CD8-positive, alpha-beta T cell (primary cell): ENCODE measurements at regions of chr14 and their contacts with region 1.

Region 1: GRCh38 chr14:21917699-21918436 is 244.2 kb upstream of the OR4E1 start:
- DNase-seq: peak in 8 of 9 experiments; percentile 38 to 83 (median 65)
- ATAC-seq: peak; percentile 55
- H3K4me3 ChIP-seq: peak overlapping the region; percentile 14 to 16
- H3K4me3 Mint-ChIP-seq: peak overlapping the region; percentile 83
- H3K27ac ChIP-seq: no peak overlapping the region
- H3K27ac Mint-ChIP-seq: peak overlapping the region; percentile 91
- H3K4me1 ChIP-seq: peaks cover 36% of the 10 kb centered on the region
- H3K4me1 Mint-ChIP-seq: peaks cover 51% of the 10 kb centered on the region
- H3K27me3 ChIP-seq: no peaks in the 10 kb centered on the region
- H3K27me3 Mint-ChIP-seq: no peaks in the 10 kb centered on the region
- CTCF ChIP-seq: peak; percentile 79

Region 2: DNA sequence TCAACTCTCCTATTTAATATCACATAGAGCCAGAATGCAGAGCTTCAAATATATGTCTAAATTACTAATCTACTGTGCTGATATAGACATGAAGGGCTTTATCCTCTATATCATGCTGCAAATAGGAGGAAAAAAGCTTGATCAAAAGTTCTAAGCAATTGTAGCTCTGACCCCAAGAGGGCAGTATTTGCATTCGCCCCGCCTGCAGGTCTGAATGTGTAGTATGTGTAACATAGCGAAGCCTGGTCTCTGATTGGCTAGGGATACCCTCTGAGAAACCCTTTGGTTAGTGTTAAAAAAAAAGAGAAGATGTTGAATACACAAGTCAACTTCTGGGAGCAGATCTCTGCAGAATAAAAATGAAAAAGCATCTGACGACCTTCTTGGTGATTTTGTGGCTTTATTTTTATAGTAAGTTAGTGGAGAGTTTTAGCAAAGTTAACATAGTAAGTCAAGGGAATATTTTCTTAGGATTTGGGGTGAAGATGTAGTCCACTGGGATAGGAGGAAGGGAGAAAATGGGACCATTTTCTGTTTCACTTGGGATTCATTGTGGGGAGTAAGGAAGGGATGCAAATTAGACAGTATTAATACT is 92.6 kb before region 1 on chr14:
- CTCF ChIA-PET with region 1: no interaction called
- POLR2A ChIA-PET with region 1: no interaction called
- intact Hi-C with region 1: no loop called
- DNase-seq: peak in 5 of 9 experiments; percentile 18 to 77 (median 47)
- ATAC-seq: peak; percentile 96
- H3K4me3 ChIP-seq: peak overlapping the region in 1 of 2 experiments; percentile 31
- H3K4me3 Mint-ChIP-seq: peak overlapping the region; percentile 58
- H3K27ac ChIP-seq: no peak overlapping the region
- H3K27ac Mint-ChIP-seq: no peak overlapping the region
- H3K4me1 ChIP-seq: no peaks in the 10 kb centered on the region
- H3K4me1 Mint-ChIP-seq: peaks cover 5% of the 10 kb centered on the region
- H3K27me3 ChIP-seq: peaks cover 0 to 3% of the 10 kb centered on the region in 2 experiments
- H3K27me3 Mint-ChIP-seq: peaks cover 26% of the 10 kb centered on the region
- CTCF ChIP-seq: peak; percentile 66

Region 3: GRCh38 chr14:21868442-21869046 is 49.3 kb before region 1 on chr14:
- CTCF ChIA-PET with region 1: interaction called, 22 read pairs
- POLR2A ChIA-PET with region 1: interaction called, 3 read pairs
- intact Hi-C with region 1: loop called (anchors 1 to 5 kb)
- DNase-seq: peak; percentile 53 to 84 (median 74)
- ATAC-seq: peak; percentile 91
- H3K4me3 ChIP-seq: peak overlapping the region in 1 of 2 experiments; percentile 2
- H3K4me3 Mint-ChIP-seq: peak overlapping the region; percentile 65
- H3K27ac ChIP-seq: no peak overlapping the region
- H3K27ac Mint-ChIP-seq: peak overlapping the region; percentile 80
- H3K4me1 ChIP-seq: peaks cover 5% of the 10 kb centered on the region
- H3K4me1 Mint-ChIP-seq: peaks cover 29% of the 10 kb centered on the region
- H3K27me3 ChIP-seq: no peaks in the 10 kb centered on the region
- H3K27me3 Mint-ChIP-seq: no peaks in the 10 kb centered on the region
- CTCF ChIP-seq: peak; percentile 81

Region 4: GRCh38 chr14:21882226-21882625 is 35.6 kb before region 1 on chr14:
- CTCF ChIA-PET with region 1: interaction called, 11 read pairs
- POLR2A ChIA-PET with region 1: no interaction called
- intact Hi-C with region 1: no loop called
- DNase-seq: no peak
- ATAC-seq: no peak
- H3K4me3 ChIP-seq: no peak overlapping the region
- H3K4me3 Mint-ChIP-seq: no peak overlapping the region
- H3K27ac ChIP-seq: no peak overlapping the region
- H3K27ac Mint-ChIP-seq: no peak overlapping the region
- H3K4me1 ChIP-seq: no peaks in the 10 kb centered on the region
- H3K4me1 Mint-ChIP-seq: peaks cover 9% of the 10 kb centered on the region
- H3K27me3 ChIP-seq: no peaks in the 10 kb centered on the region
- H3K27me3 Mint-ChIP-seq: no peaks in the 10 kb centered on the region
- CTCF ChIP-seq: no peak

Region 5: DNA sequence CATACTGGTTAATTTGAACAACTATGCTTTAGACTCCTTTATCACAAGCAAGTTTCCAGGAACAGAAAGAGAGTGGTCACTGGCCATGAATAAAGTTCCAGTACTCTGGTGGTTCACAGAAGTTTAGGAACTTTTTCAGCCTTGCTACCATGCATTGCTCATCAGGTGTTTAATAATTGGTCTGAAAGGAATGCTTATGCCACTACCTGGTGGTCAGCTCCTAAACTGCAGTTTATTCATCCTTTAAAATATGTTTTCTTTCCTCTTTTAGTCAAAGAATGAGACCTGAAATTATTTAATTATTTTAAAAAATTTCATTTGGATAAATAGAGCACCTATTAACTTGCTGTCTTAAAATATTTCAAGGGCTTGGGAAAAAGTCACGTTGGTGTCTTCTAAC is 15.8 kb after region 1 on chr14:
- CTCF ChIA-PET with region 1: interaction called, 30 read pairs
- POLR2A ChIA-PET with region 1: interaction called, 7 read pairs
- intact Hi-C with region 1: loop called (anchors 1 kb)
- DNase-seq: peak in 2 of 9 experiments; percentile 42 to 60
- ATAC-seq: peak; percentile 73
- H3K4me3 ChIP-seq: no peak overlapping the region
- H3K4me3 Mint-ChIP-seq: no peak overlapping the region
- H3K27ac ChIP-seq: no peak overlapping the region
- H3K27ac Mint-ChIP-seq: no peak overlapping the region
- H3K4me1 ChIP-seq: peaks cover 5% of the 10 kb centered on the region
- H3K4me1 Mint-ChIP-seq: peaks cover 10% of the 10 kb centered on the region
- H3K27me3 ChIP-seq: no peaks in the 10 kb centered on the region
- H3K27me3 Mint-ChIP-seq: no peaks in the 10 kb centered on the region
- CTCF ChIP-seq: peak; percentile 58

Region 6: DNA sequence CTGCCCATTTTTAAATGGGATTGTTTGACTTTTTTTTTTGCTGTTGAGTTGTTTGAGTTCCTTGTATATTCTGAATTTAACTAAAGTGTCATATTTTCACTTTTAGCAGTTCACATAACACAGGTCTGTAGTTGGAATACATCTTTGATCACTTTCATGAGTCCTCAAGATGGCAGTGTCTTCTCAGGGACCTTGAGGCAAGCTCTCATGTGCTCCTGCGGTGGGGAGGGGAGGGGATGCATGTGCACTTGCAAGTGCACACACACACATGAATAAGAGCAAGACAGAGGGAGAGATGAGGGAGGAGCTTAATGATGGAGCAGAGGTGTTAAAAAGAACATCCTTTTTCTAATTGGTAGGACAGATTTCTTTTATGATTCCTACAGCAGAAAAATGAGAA is 47.2 kb after region 1 on chr14:
- CTCF ChIA-PET with region 1: no interaction called
- POLR2A ChIA-PET with region 1: interaction called, 3 read pairs
- intact Hi-C with region 1: loop called in 1 of 2 experiments (anchors 1 kb)
- DNase-seq: peak in 6 of 9 experiments; percentile 30 to 74 (median 58)
- ATAC-seq: peak; percentile 91
- H3K4me3 ChIP-seq: no peak overlapping the region
- H3K4me3 Mint-ChIP-seq: peak overlapping the region; percentile 4
- H3K27ac ChIP-seq: no peak overlapping the region
- H3K27ac Mint-ChIP-seq: peak overlapping the region; percentile 66
- H3K4me1 ChIP-seq: no peaks in the 10 kb centered on the region
- H3K4me1 Mint-ChIP-seq: peaks cover 25% of the 10 kb centered on the region
- H3K27me3 ChIP-seq: no peaks in the 10 kb centered on the region
- H3K27me3 Mint-ChIP-seq: peaks cover 2% of the 10 kb centered on the region
- CTCF ChIP-seq: no peak

Region 7: DNA sequence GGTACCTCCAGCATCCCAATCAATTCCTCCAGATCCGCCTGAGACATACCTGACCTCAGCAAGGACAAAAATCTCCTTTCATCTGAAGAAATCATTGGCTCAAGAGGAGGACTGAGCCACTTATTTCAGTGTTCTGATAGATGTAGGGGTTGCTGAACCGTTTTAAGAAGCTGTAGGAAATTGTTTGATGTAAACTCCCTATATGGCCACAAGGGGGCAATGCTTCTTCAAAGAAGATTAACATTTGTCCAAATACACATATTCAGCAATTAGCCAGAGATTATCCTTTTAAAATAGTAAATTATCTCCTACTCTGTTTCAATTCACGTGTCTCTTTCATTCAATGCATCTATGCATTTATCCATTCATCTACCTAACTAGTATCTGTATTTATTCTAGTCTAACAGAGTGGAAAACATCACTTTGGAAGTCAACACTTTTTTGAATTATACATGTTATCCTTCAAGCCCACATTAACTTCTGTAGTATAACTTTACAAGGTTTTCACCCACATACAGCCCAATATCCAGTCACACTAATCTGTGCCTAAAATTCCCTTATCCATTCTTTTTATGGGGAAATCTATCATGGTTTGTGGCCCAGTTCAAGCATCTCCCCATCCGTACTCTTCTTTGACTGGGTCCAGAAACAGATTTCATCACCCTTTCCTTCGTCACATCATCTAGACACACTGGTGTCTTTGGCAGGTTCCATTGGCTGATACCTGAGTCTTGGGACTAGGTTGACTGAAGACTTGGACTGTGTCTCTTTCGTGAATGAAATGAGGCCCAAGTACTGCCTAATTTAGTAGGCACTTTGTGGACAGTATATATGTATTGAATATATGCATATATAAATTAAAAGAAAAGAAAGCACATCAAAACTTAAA is 166.8 kb after region 1 on chr14:
- CTCF ChIA-PET with region 1: no interaction called
- POLR2A ChIA-PET with region 1: no interaction called
- intact Hi-C with region 1: loop called in 1 of 2 experiments (anchors 10 kb)
- DNase-seq: peak in 3 of 9 experiments; percentile 20 to 74 (median 58)
- ATAC-seq: peak; percentile 65
- H3K4me3 ChIP-seq: no peak overlapping the region
- H3K4me3 Mint-ChIP-seq: peak overlapping the region; percentile 32
- H3K27ac ChIP-seq: no peak overlapping the region
- H3K27ac Mint-ChIP-seq: peak overlapping the region; percentile 76
- H3K4me1 ChIP-seq: no peaks in the 10 kb centered on the region
- H3K4me1 Mint-ChIP-seq: peaks cover 33% of the 10 kb centered on the region
- H3K27me3 ChIP-seq: no peaks in the 10 kb centered on the region
- H3K27me3 Mint-ChIP-seq: no peaks in the 10 kb centered on the region
- CTCF ChIP-seq: peak; percentile 54

Region 8: GRCh38 chr14:22491683-22492621 is 574.1 kb after region 1 on chr14:
- CTCF ChIA-PET with region 1: no interaction called
- POLR2A ChIA-PET with region 1: no interaction called
- intact Hi-C with region 1: loop called in 1 of 2 experiments (anchors 10 kb)
- DNase-seq: peak in 4 of 9 experiments; percentile 43 to 83 (median 56)
- ATAC-seq: peak; percentile 43
- H3K4me3 ChIP-seq: peak overlapping the region; percentile 33 to 53
- H3K4me3 Mint-ChIP-seq: peak overlapping the region; percentile 84
- H3K27ac ChIP-seq: peak overlapping the region; percentile 32 to 77
- H3K27ac Mint-ChIP-seq: peak overlapping the region; percentile 99
- H3K4me1 ChIP-seq: no peaks in the 10 kb centered on the region
- H3K4me1 Mint-ChIP-seq: peaks cover 34% of the 10 kb centered on the region
- H3K27me3 ChIP-seq: no peaks in the 10 kb centered on the region
- H3K27me3 Mint-ChIP-seq: no peaks in the 10 kb centered on the region
- CTCF ChIP-seq: no peak